Heart right ventricle (tissue), 16 donors: ENCODE measurements at regions of chr1 and their contacts with region 1.

Region 1: GRCh38 chr1:59971464-59971911 is 44.9 kb upstream of the CYP2J2 start:
- DNase-seq: peak; percentile 63 to 68
- ATAC-seq: peak; percentile 78 to 93 (median 86)
- H3K4me3 ChIP-seq: no peak overlapping the region
- H3K27ac ChIP-seq: no peak overlapping the region
- H3K4me1 ChIP-seq: peaks cover 0 to 7% (median under 1%) of the 10 kb centered on the region in 9 donors
- H3K27me3 ChIP-seq: peaks cover 0 to 6% (median 0%) of the 10 kb centered on the region in 7 donors
- CTCF ChIP-seq: peak; percentile 82 to 93 (median 90)

Region 2: DNA sequence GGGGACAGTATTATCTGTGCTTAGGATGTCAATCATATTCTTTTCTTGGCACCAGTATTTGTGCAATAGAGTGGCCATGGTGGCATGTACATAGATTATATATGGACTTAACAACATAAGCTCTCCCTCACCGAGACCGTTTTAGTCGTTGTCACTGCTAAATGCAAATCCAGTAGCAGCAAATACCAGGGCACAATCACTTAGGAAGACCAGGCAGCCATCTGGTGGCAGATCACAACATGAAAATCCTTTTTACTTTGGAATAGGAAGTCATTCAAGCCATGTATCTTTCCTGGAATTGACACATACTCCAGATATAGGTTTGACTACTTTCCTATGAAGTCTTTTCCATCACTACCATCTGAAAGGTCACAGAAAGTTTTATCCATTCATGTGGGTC is 155.2 kb after region 1 on chr1:
- intact Hi-C with region 1: loop called in 2 of 10 experiments (anchors 5 kb)
- DNase-seq: no peak
- ATAC-seq: no peak
- H3K4me3 ChIP-seq: no peak overlapping the region
- H3K27ac ChIP-seq: no peak overlapping the region
- H3K4me1 ChIP-seq: no peaks in the 10 kb centered on the region
- H3K27me3 ChIP-seq: no peaks in the 10 kb centered on the region
- CTCF ChIP-seq: peak in 4 of 9 donors; percentile 9 to 22 (median 19)

Region 3: DNA sequence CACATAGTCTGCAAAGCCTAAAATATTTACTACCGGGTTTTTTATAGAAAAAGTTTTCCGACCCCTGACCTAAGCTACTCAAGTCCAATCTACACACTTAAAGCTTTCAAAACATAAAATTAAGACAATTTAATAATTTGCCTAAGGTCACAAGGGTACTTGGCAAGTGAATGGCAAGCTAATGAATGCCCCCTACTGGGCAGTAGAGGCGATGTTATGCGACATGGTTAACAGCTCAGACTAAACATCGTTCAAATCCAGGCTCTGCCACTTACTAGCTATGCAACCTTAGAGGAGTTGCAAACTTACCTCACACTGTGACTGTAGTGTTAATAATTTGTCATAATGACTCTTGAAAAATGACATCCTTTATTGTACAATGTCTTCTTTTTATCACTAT is 793.7 kb after region 1 on chr1:
- intact Hi-C with region 1: loop called in 1 of 10 experiments (anchors 10 kb)
- DNase-seq: no peak
- ATAC-seq: peak in 6 of 8 donors; percentile 31 to 64 (median 50)
- H3K4me3 ChIP-seq: no peak overlapping the region
- H3K27ac ChIP-seq: no peak overlapping the region
- H3K4me1 ChIP-seq: peaks cover 7 to 33% (median 16%) of the 10 kb centered on the region in 9 donors
- H3K27me3 ChIP-seq: no peaks in the 10 kb centered on the region
- CTCF ChIP-seq: peak in 8 of 9 donors; percentile 49 to 75 (median 64)

Region 4: GRCh38 chr1:60969971-60970509 is 998.6 kb after region 1 on chr1:
- intact Hi-C with region 1: loop called in 1 of 10 experiments (anchors 10 kb)
- DNase-seq: no peak
- ATAC-seq: peak; percentile 52 to 83 (median 75)
- H3K4me3 ChIP-seq: peak overlapping the region in 1 of 10 donors; percentile 10
- H3K27ac ChIP-seq: peak overlapping the region in 7 of 10 donors; percentile 41 to 76 (median 66)
- H3K4me1 ChIP-seq: peaks cover 0 to 14% (median 8%) of the 10 kb centered on the region in 9 donors
- H3K27me3 ChIP-seq: no peaks in the 10 kb centered on the region
- CTCF ChIP-seq: peak; percentile 17 to 70 (median 60)

Region 5: GRCh38 chr1:61035880-61036279 is 1064.4 kb after region 1 on chr1:
- intact Hi-C with region 1: loop called in 7 of 10 experiments (anchors 5 to 10 kb)
- DNase-seq: no peak
- ATAC-seq: no peak
- H3K4me3 ChIP-seq: no peak overlapping the region
- H3K27ac ChIP-seq: no peak overlapping the region
- H3K4me1 ChIP-seq: no peaks in the 10 kb centered on the region
- H3K27me3 ChIP-seq: no peaks in the 10 kb centered on the region
- CTCF ChIP-seq: no peak